AG04449 (cell line): ENCODE measurements at regions of chr1 and their contacts with region 1.

Region 1: DNA sequence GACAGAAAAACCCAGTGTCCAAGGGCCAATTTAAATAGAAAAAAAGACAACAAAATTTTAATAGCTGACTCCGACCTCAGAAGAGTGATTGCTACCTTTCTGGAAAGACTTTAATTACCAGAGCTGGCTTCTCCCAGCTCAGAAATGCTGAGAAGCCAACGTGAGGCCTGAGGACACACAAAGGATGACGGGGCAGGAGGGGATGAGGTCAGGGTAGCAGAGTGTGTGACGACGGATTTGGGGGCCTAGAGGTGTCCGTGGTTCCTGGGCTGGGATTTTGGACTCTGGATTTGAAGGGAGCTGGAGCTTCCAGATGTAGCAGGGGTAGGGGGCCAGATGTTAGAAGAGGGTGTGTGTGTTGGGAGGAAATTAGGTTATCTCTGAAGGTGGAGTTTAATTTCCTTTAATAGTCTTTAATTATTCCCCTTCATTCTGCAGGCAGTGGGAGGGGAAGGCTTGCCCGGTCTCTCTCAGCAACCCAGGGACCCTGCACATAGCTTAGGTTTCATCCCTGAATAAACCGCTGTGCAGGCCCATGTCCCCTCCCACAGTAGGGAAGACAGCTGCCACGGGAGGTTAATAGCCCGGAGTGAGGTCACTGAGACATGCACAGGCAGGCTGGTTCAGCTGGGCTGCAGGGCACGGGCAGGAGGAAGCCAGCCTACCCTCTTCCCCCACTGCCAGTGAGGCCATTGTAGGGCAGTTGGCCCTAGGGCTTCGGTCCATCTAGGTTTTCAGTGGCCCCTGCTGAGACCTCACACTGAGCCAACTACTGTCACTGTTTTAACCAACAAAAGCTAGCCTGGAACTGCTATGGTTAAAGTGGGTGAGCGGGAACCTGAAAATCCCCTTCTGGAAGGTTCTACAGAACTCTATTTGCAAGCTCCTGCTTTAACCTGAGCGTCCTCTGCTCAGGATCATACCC is 3.8 kb upstream of the PADI3 start:
- DNase-seq: no peak
- H3K4me3 ChIP-seq: no peak overlapping the region
- CTCF ChIP-seq: no peak

Region 2: DNA sequence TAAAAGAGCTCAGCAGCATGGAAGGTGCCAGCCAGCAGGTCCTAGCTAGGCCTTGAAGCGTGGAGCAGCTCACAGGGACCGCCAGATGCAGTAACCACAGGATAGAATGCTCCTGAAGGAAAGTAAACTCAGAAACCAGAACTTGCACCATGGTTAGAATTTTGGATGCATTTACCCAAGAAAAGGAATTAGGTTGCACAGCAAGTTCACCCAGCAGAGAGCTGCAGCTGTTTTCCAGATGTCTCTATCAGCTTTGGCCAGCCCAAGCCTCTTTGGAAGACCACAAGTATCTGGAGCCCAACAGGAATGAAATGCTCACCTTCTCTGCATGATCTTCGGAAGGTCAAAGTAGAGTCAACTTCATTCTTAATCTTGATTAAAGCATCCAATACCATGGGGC is 212.3 kb before region 1 on chr1:
- CTCF ChIA-PET with region 1: no interaction called
- POLR2A ChIA-PET with region 1: no interaction called
- DNase-seq: no peak
- H3K4me3 ChIP-seq: no peak overlapping the region
- CTCF ChIP-seq: no peak

Region 3: GRCh38 chr1:17119076-17119772 is 125.9 kb before region 1 on chr1 and contains the start of gene PADI2:
- CTCF ChIA-PET with region 1: interaction called, 669 read pairs
- POLR2A ChIA-PET with region 1: no interaction called
- DNase-seq: no peak
- H3K4me3 ChIP-seq: peak within 1 kb of the TSS; percentile 47
- CTCF ChIP-seq: no peak